RWPE1 (cell line): ENCODE measurements at regions of chr6 and their contacts with region 1.

Region 1: DNA sequence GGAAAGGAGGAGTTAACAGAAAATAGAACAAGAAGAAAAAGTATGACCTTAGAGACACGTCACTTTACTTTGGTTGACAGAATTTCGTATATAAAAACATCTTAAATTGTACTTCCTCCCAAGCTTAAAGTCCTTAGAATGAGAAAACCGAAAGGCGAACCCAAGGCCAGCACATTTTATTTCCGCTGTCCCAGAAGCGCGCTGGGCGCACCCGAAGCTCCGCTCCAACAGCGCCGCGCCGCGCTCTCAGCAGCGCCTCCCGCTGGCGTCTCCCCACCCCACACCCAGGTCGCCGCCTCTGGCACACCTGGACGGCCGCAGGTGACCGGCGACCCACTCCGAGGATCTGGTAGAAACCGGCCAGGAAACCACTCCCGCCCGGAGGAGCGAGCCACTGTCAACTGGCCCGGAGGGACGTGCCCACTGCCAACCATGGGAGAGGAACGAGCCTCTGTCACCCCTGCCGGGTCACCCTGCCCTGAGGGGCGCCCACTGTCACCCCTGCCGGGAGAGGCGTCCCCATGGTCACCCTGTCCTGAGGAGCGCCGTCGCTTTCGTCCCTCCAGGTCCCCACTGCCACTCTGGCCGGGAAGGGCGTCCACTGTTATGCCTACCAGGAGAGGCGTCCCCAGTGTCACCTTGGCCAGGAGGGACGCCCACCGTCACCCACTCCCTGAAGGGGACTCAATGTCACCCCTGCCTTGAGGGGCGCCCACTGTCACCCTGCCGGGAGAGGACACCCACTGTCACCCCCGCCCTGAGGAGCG is 824 bp downstream of the MPC1 start:
- DNase-seq: peak; percentile 80
- H3K27ac ChIP-seq: peak overlapping the region; percentile 93
- CTCF ChIP-seq: peak; percentile 94

Region 2: DNA sequence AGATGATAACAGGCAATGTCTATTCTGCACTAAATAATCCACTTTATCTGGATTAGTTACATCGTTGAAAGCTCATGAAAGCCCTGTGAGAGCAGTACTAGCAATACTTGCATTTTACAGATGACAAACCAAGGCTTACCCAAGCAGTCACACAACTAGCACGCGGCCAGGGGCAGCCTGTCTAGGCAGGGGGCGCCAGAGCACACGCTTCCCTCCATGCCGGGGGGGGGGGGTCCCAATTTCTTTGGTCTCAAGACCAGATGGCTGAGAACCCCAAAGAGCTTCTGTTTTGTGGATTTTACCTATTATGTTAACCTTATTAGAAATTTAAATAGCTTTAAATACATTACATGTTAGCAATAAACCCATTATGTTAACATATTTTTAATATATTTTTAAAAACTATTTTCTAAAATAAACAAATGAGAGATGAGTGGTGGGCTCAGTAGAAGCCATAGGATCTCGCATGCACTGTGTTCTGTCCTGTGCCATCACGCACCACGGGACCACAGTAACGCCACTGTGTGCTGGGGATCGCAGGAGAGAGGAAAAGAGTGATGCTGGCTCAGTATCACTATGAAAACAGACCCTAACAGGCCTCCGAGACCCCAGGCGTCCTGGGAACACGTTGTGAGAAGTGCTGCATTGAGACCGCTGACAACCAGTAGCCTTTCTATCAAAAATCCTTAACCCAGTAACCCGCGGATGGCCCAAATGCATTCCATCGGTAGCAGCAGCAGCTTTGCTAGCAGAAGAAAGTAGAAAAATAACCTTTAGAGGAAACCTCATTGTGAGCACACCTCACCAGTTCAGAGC is 68.5 kb before region 1 on chr6:
- CTCF ChIA-PET with region 1: interaction called, 14 read pairs
- POLR2A ChIA-PET with region 1: no interaction called
- DNase-seq: peak; percentile 64
- H3K27ac ChIP-seq: no peak overlapping the region
- CTCF ChIP-seq: peak; percentile 74